Dendritic cell treated with granulocyte-macrophage colony-stimulating factor and Interleukin-4, amounts not matched to agents 40 ng/mL and 50 ng/mL, for 4 days (primary cell): ENCODE measurements at regions of chr14 and their contacts with region 1.

Region 1: DNA sequence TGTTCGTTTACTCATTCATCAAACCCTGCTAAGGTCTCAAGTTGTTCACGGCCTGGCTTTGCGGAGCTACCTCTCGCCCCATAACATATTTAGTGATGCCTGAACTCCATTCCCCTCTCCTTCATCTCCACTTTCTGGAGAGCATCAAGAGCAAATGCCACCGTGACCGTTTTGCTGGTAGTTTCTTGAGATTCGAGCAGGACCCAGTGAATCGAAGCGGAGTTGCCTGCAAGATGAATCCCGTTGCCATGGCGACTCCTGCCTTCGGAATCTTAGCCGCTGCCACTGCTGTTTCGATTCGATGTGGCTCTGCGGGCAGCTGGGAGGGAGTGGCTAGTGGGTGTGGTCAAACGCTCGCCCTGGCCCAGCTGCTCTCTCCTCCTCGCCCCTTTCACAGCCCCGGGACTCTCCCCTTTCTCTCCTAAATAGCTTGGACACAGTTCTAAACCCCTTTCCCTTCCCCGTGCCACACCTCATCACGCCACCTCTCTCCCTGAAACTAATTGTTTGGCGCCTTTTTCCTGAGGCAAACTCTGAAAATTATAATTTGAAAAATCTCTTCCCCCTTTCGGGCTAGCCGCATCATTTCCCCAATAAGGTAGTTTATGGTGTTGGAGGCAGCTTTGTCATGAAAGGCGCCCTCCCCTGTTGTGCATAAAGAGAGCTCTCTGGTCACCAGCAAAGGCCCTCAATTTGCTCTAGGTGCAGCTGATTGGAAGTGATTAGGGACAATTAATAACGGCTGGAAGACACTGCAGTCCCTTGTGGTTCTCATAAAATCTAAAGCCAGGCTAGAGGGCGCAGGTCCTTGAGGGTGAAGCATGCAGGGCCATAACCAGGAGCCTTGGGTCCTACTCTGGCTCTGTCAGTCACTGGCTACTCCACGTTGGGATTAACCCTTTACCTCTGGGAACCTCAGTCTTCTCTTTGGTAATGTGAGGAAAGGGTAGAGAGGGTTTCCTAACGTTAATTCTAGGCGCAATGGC is 1.6 kb downstream of the DAAM1 start:
- H3K4me3 Mint-ChIP-seq: peak overlapping the region; percentile 85
- H3K27ac Mint-ChIP-seq: peak overlapping the region; percentile 86
- H3K4me1 Mint-ChIP-seq: peaks cover 30% of the 10 kb centered on the region
- H3K27me3 Mint-ChIP-seq: peaks cover 18% of the 10 kb centered on the region

Region 2: GRCh38 chr14:59150990-59151389 is 39.1 kb before region 1 on chr14:
- intact Hi-C with region 1: loop called (anchors 5 kb)
- H3K4me3 Mint-ChIP-seq: peak overlapping the region; percentile 62
- H3K27ac Mint-ChIP-seq: peak overlapping the region; percentile 85
- H3K4me1 Mint-ChIP-seq: peaks cover 37% of the 10 kb centered on the region
- H3K27me3 Mint-ChIP-seq: peaks cover 3% of the 10 kb centered on the region

Region 3: GRCh38 chr14:59245809-59246295 is 55.8 kb after region 1 on chr14:
- intact Hi-C with region 1: no loop called
- H3K4me3 Mint-ChIP-seq: no peak overlapping the region
- H3K27ac Mint-ChIP-seq: no peak overlapping the region
- H3K4me1 Mint-ChIP-seq: peaks cover 17% of the 10 kb centered on the region
- H3K27me3 Mint-ChIP-seq: no peaks in the 10 kb centered on the region

Region 4: GRCh38 chr14:59320763-59321640 is 130.9 kb after region 1 on chr14:
- intact Hi-C with region 1: loop called (anchors 10 kb)
- H3K4me3 Mint-ChIP-seq: no peak overlapping the region
- H3K27ac Mint-ChIP-seq: no peak overlapping the region
- H3K4me1 Mint-ChIP-seq: peaks cover 24% of the 10 kb centered on the region
- H3K27me3 Mint-ChIP-seq: no peaks in the 10 kb centered on the region

Region 5: GRCh38 chr14:59422069-59422881 is 232.2 kb after region 1 on chr14:
- intact Hi-C with region 1: loop called (anchors 5 kb)
- H3K4me3 Mint-ChIP-seq: no peak overlapping the region
- H3K27ac Mint-ChIP-seq: peak overlapping the region; percentile 8
- H3K4me1 Mint-ChIP-seq: peaks cover 65% of the 10 kb centered on the region
- H3K27me3 Mint-ChIP-seq: peaks cover 2% of the 10 kb centered on the region

Region 6: DNA sequence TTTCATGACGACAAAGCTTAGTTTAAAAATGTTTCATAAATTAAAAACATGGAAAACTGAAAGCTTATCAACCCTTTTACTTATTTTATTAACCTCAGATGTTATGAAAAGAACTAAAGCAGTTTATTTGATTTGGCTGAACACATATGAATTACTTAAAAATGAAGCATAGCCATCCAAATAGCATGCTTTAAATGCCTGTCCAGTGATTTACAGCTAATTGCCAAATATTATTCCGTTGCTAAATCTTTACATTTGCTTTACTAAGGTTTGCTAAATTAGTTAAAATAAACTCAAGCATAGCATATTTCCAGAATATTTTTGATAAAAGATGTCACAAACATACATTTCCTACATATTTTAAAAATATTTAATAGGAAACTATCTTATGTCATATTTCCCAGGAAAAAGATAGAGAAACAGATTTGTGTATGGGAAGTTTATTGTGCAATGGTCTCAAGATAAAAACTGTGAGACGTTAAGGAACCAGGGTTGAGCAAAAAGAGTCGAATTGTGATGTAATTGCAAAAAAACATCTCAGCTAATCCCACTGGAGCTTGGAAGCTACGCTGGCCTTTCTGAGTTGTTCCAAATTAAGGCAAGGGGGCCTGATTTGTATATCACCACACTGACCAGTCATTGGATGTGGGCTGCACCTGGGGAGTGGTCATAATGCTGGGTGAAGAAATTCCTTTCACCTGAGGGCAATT is 249.3 kb after region 1 on chr14:
- intact Hi-C with region 1: loop called (anchors 2 kb)
- H3K4me3 Mint-ChIP-seq: no peak overlapping the region
- H3K27ac Mint-ChIP-seq: no peak overlapping the region
- H3K4me1 Mint-ChIP-seq: peaks cover 65% of the 10 kb centered on the region
- H3K27me3 Mint-ChIP-seq: no peaks in the 10 kb centered on the region

Region 7: GRCh38 chr14:59483900-59484638 is 294.0 kb after region 1 on chr14 and contains the starts of genes JKAMP and L3HYPDH:
- intact Hi-C with region 1: loop called (anchors 1 kb)
- H3K4me3 Mint-ChIP-seq: peak within 1 kb of the TSS; percentile 85
- H3K27ac Mint-ChIP-seq: peak within 1 kb of the TSS; percentile 93
- H3K4me1 Mint-ChIP-seq: peaks cover 53% of the 10 kb centered on the region
- H3K27me3 Mint-ChIP-seq: no peaks in the 10 kb centered on the region